ENCODE measurements at regions of chr19 and their contacts with region 1.

Region 1: GRCh38 chr19:4723367-4724187 is at the start of gene DPP9:
- DNase-seq: peak; percentile 91 to 99
- H3K4me3 ChIP-seq: peak within 1 kb of the TSS; percentile 87 to 98
- H3K27ac ChIP-seq: peak within 1 kb of the TSS; percentile 89 to 93
- H3K4me1 ChIP-seq: peaks cover 6 to 15% of the 10 kb centered on the region in 2 donors
- H3K27me3 ChIP-seq: no peaks in the 10 kb centered on the region
- CTCF ChIP-seq: peak; percentile 6 to 41 (median 34)
- total RNA-seq, gene DPP9: 72.2 TPM

Region 2: GRCh38 chr19:4597975-4598671 is 125.5 kb before region 1 on chr19:
- intact Hi-C with region 1: no loop called
- DNase-seq: no peak
- H3K4me3 ChIP-seq: no peak overlapping the region
- H3K27ac ChIP-seq: no peak overlapping the region
- H3K4me1 ChIP-seq: no peaks in the 10 kb centered on the region
- H3K27me3 ChIP-seq: peaks cover 10% of the 10 kb centered on the region
- CTCF ChIP-seq: no peak

Region 3: GRCh38 chr19:4638828-4639530 is 84.6 kb before region 1 on chr19 and contains the start of gene TNFAIP8L1:
- intact Hi-C with region 1: loop called (anchors 1 kb)
- DNase-seq: peak; percentile 89 to 97
- H3K4me3 ChIP-seq: peak within 1 kb of the TSS; percentile 71 to 76
- H3K27ac ChIP-seq: peak within 1 kb of the TSS in 1 of 2 donors; percentile 56
- H3K4me1 ChIP-seq: peaks cover 5 to 12% of the 10 kb centered on the region in 2 donors
- H3K27me3 ChIP-seq: no peaks in the 10 kb centered on the region
- CTCF ChIP-seq: no peak
- total RNA-seq, gene TNFAIP8L1: 0.64 TPM

Region 4: GRCh38 chr19:4713384-4713951 is 10.1 kb before region 1 on chr19:
- intact Hi-C with region 1: loop called (anchors 1 kb)
- DNase-seq: peak; percentile 65 to 90
- H3K4me3 ChIP-seq: no peak overlapping the region
- H3K27ac ChIP-seq: peak overlapping the region; percentile 54 to 64
- H3K4me1 ChIP-seq: peaks cover 24 to 38% of the 10 kb centered on the region in 2 donors
- H3K27me3 ChIP-seq: no peaks in the 10 kb centered on the region
- CTCF ChIP-seq: no peak

Region 5: GRCh38 chr19:4768934-4769777 is 45.6 kb after region 1 on chr19:
- intact Hi-C with region 1: no loop called
- DNase-seq: peak in 1 of 2 donors; percentile 87
- H3K4me3 ChIP-seq: no peak overlapping the region
- H3K27ac ChIP-seq: no peak overlapping the region
- H3K4me1 ChIP-seq: no peaks in the 10 kb centered on the region
- H3K27me3 ChIP-seq: no peaks in the 10 kb centered on the region
- CTCF ChIP-seq: no peak

Region 6: DNA sequence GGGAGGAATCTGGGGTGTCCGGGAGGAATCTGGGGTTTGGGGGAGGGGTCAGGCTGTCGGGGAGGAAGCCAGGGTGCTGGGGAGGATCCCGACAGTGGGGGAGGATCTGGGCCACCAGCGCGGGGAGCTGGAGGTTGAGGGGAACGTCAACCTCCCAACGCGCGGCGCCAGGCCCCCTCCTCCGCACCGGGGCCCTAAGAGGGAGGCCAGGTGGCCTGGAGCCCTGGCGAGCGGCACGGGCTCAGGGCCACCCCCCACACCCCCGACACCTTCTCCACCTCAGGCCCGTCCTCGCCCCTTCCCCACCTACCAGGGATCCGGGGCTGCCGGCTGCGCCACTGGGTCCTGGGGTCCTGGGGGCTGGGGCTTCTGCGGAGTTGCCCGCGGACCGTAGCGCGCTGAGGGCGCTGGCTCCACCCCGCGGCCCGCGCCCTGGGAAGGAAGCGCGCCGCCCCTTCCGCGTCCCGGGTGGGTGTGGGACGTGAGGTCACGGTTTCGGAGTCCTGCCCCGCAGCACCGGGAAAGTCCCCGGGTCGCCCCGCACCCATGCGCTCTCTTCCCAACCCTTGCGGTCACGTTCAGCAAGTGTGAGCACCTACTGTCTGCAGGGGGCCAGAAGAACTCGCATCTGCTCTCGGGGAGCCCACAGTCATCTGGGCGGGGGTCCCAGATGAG is 107.9 kb after region 1 on chr19 and contains the start of gene TICAM1:
- intact Hi-C with region 1: no loop called
- DNase-seq: peak; percentile 25 to 83
- H3K4me3 ChIP-seq: peak within 1 kb of the TSS; percentile 94 to 98
- H3K27ac ChIP-seq: peak within 1 kb of the TSS; percentile 96 to 99
- H3K4me1 ChIP-seq: peaks cover 5 to 12% of the 10 kb centered on the region in 2 donors
- H3K27me3 ChIP-seq: no peaks in the 10 kb centered on the region
- CTCF ChIP-seq: peak in 2 of 3 experiments; percentile 14 to 15
- total RNA-seq, gene TICAM1: 20.3 TPM

Region 7: GRCh38 chr19:4867534-4868285 is 144.1 kb after region 1 on chr19 and contains the start of gene PLIN3:
- intact Hi-C with region 1: loop called (anchors 5 kb)
- DNase-seq: peak; percentile 89 to 98
- H3K4me3 ChIP-seq: peak within 1 kb of the TSS; percentile 71 to 83
- H3K27ac ChIP-seq: peak within 1 kb of the TSS; percentile 68 to 81
- H3K4me1 ChIP-seq: peaks cover 5 to 17% of the 10 kb centered on the region in 2 donors
- H3K27me3 ChIP-seq: no peaks in the 10 kb centered on the region
- CTCF ChIP-seq: no peak
- total RNA-seq, gene PLIN3: 84.3 TPM

Region 8: GRCh38 chr19:4968462-4969291 is 245.1 kb after region 1 on chr19 and contains the start of gene KDM4B:
- intact Hi-C with region 1: loop called (anchors 10 kb)
- DNase-seq: peak; percentile 99 to 100
- H3K4me3 ChIP-seq: peak within 1 kb of the TSS; percentile 62 to 90
- H3K27ac ChIP-seq: peak within 1 kb of the TSS; percentile 24 to 40
- H3K4me1 ChIP-seq: peaks cover 9 to 18% of the 10 kb centered on the region in 2 donors
- H3K27me3 ChIP-seq: no peaks in the 10 kb centered on the region
- CTCF ChIP-seq: no peak
- total RNA-seq, gene KDM4B: 46.0 TPM